ENCODE measurements at regions of chr13 and their contacts with region 1.

Region 1: DNA sequence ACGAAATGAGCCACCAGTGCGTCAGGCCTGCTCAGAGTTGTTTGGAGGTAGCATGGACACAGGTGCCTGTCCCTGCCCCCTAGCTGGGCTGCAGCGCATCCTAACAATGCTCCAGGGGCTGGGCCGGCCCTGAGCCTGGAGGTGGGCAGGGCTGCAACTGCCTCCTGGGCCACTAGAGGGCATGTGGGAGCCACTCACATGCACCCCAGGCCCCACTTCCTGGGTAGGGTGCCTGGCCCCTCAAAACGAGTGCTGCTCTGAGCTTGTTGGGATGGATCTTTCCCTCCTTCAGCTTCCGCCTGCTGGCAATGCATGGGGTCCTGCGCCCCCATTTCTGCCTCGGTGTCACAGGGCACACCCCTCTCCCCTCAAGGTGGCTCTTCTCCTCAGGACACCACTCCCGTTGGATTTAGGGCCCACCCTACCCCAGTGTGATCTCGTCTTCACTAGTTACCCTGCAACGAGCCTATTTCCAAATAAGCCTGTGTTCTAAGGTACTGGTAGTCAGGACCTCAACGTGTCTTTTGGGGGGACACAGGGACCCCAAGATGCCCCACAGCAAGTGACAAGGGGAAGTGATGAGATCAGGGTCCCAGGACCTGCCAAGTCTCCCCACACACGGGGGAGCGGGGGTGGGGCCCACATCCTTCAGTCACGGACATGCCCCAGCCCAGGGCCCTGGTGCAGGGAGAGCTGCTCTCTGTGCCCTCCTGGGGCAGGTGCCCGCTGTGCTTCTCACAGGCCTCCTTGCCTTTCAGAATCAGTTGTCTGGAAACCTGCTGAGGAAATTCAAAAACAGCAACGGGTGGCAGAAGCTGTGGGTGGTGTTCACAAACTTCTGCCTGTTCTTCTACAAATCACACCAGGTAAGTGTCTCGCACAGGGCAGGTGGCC is 131.3 kb downstream of the STK24 start:
- DNase-seq: peak; percentile 80
- H3K4me3 ChIP-seq: no peak overlapping the region
- H3K27ac ChIP-seq: peak overlapping the region; percentile 3 to 66 (median 16)
- H3K4me1 ChIP-seq: peaks cover 6 to 19% (median 13%) of the 10 kb centered on the region in 4 donors
- H3K27me3 ChIP-seq: no peaks in the 10 kb centered on the region
- CTCF ChIP-seq: peak; percentile 94 to 98 (median 97)
- EP300 ChIP-seq: no peak
- POLR2A ChIP-seq: no peak

Region 2: GRCh38 chr13:98142380-98143156 is 303.0 kb before region 1 on chr13 and contains the start of gene FARP1:
- in situ Hi-C with region 1: no loop called
- intact Hi-C with region 1: loop called (anchors 1 kb)
- DNase-seq: peak; percentile 84
- H3K4me3 ChIP-seq: peak within 1 kb of the TSS; percentile 78 to 96 (median 90)
- H3K27ac ChIP-seq: peak within 1 kb of the TSS; percentile 81 to 90 (median 84)
- H3K4me1 ChIP-seq: peaks cover 16 to 23% (median 19%) of the 10 kb centered on the region in 4 donors
- H3K27me3 ChIP-seq: peaks cover 5% of the 10 kb centered on the region
- CTCF ChIP-seq: peak in 2 of 5 experiments; percentile 30 to 38
- EP300 ChIP-seq: no peak
- POLR2A ChIP-seq: peak; percentile 32
- total RNA-seq, gene FARP1: 32.8 to 41.8 (median 38.3) TPM

Region 3: DNA sequence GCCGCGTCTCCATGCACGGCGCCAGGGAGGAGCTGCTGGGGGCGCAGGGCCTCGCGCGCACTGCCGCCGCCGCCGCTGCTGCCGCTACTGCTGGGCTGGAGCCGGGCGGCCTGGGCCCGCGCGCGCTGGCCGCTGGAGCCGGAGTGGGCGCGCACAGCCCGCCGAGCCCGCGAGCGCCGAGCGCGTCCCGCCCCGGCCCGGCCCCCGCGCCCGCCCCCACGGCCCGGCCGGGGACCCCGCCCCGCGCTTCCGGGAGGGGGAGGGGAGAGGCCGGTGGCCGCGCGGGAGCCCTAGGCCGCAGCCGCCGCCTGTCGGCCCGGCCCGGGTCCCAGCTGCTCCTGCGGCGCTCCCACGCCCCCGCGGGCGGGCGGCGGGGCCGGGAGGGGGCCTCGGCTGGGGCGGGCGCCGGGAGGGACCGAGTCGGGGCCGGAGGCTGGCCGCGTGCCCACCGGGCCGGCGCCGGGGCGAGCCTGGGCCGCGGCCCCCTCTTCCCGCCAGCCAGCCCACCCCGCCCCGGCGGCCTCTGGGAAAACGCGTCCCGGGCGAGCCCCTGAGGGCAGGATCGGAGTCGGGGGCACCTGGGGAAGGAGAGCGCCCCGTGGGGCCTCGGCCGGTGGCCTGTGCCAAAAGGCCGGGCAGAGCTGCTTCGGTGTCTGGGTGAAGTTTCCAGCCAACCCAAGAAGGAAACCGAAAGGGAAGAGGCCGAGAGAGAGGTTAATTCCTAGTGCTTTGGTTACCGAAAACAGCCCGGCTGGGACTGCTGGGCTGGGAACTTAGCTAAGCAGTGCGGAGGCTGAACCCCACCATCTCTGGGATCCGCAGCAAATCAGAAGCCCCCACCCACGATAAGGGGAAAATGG is 131.6 kb after region 1 on chr13 and contains the start of gene STK24:
- in situ Hi-C with region 1: no loop called
- intact Hi-C with region 1: loop called (anchors 1 kb)
- DNase-seq: peak; percentile 78
- H3K4me3 ChIP-seq: peak within 1 kb of the TSS; percentile 82 to 96 (median 82)
- H3K27ac ChIP-seq: peak within 1 kb of the TSS; percentile 97 to 100 (median 100)
- H3K4me1 ChIP-seq: peaks cover 16 to 52% (median 42%) of the 10 kb centered on the region in 4 donors
- H3K27me3 ChIP-seq: no peaks in the 10 kb centered on the region
- CTCF ChIP-seq: no peak
- EP300 ChIP-seq: no peak
- POLR2A ChIP-seq: peak; percentile 60
- total RNA-seq, gene STK24: 87.2 to 152 (median 131) TPM

Region 4: DNA sequence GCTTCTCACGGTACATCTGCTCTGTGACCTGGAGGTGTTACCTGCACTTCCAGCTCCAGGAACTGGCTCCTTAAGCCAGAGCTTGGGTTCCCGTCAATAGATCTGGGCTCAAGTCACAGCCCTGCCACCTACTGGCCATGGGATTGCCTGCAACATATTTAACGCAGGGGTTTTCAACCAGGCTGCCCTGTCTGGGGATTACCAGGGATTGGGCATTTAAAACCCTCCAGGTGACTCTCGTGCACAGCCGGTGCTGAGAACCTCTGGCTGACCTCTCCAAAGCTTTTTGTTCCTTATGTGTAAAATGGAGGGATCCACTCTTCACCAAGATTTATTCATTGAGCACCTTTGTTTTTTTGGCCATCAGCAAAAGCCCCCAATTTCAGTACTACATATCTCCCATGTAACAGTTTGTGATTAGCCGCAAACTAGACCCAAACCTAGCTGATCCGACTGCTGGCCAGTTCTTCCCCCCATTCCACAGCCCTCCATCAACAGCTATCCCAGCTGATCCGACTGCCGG is 207.9 kb after region 1 on chr13:
- in situ Hi-C with region 1: loop called (anchors 5 to 10 kb)
- intact Hi-C with region 1: loop called (anchors 5 kb)
- DNase-seq: peak; percentile 88
- H3K4me3 ChIP-seq: no peak overlapping the region
- H3K27ac ChIP-seq: peak overlapping the region in 1 of 4 donors; percentile 23
- H3K4me1 ChIP-seq: peaks cover 11 to 39% (median 27%) of the 10 kb centered on the region in 4 donors
- H3K27me3 ChIP-seq: no peaks in the 10 kb centered on the region
- CTCF ChIP-seq: peak; percentile 87 to 95 (median 94)
- EP300 ChIP-seq: no peak
- POLR2A ChIP-seq: no peak

Region 5: GRCh38 chr13:98842864-98843481 is 397.4 kb after region 1 on chr13:
- in situ Hi-C with region 1: loop called in 3 of 4 experiments (anchors 25 kb)
- intact Hi-C with region 1: no loop called
- DNase-seq: peak; percentile 73
- H3K4me3 ChIP-seq: no peak overlapping the region
- H3K27ac ChIP-seq: no peak overlapping the region
- H3K4me1 ChIP-seq: no peaks in the 10 kb centered on the region
- H3K27me3 ChIP-seq: no peaks in the 10 kb centered on the region
- CTCF ChIP-seq: peak; percentile 77 to 85 (median 80)
- EP300 ChIP-seq: no peak
- POLR2A ChIP-seq: no peak

Region 6: GRCh38 chr13:99749271-99750019 is 1303.9 kb after region 1 on chr13:
- in situ Hi-C with region 1: no loop called
- intact Hi-C with region 1: no loop called
- DNase-seq: no peak
- H3K4me3 ChIP-seq: no peak overlapping the region
- H3K27ac ChIP-seq: no peak overlapping the region
- H3K4me1 ChIP-seq: peaks cover 7 to 16% (median 10%) of the 10 kb centered on the region in 4 donors
- H3K27me3 ChIP-seq: no peaks in the 10 kb centered on the region
- CTCF ChIP-seq: no peak
- EP300 ChIP-seq: no peak
- POLR2A ChIP-seq: no peak

Measured in transverse colon (tissue), 4 donors.